ENCODE measurements at regions of chr16 and their contacts with region 1.

Region 1: GRCh38 chr16:86016201-86016871 is 117.4 kb downstream of the IRF8 start:
- DNase-seq: peak; percentile 59
- ATAC-seq: peak; percentile 75
- H3K4me3 ChIP-seq: no peak overlapping the region
- H3K27ac ChIP-seq: no peak overlapping the region
- H3K4me1 ChIP-seq: peaks cover 20% of the 10 kb centered on the region
- H3K27me3 ChIP-seq: no peaks in the 10 kb centered on the region
- CTCF ChIP-seq: peak; percentile 69 to 90 (median 79)
- EP300 ChIP-seq: no peak
- POLR2A ChIP-seq: no peak
- RAD21 ChIP-seq: peak; percentile 99

Region 2: DNA sequence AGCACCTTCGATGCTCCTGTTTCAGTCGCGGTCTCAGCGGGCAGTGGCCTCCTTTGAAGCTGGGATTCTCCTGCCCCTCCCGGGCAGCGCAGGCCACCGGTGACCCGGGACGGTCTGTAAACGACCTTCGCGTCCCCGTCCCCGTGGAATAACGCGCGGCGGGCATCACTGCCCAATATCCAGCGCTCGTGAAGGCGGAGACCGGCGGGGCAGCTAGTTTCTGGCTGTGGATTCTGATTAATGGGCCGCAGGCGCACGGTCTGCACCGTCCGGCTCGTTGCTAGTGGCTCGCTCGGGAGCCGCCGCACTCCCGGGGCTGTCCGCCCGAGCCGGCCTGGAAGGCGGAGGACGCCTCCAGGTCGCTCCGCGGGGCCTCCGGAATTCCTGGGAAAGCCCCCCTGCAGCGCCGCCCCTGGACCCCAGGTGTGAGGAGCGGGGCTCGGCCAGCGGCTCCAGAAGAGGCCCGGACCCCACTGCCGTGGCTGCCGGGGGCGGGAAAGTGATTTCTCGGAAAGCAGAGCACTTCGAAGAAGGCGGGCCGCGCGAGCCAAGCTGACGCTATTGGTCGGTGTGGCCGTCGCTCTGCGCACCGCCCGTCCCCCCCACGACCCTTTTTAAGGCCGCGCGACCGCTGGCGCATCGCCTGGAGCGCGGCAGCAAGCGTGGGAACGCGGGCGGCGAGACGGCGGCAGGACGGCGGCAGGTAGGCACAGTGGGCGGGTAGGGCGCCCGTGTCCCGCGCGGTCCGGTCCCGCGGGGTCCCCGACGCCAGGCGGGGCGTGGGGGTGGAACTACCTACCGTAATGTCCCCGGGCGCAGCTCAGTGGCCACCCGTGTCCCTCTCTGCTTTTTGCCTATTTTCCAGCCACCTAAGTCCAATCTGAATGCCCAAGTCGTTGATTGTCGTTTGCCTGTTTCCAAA is 117.6 kb before region 1 on chr16 and contains the start of gene IRF8:
- CTCF ChIA-PET with region 1: interaction called, 14 read pairs
- POLR2A ChIA-PET with region 1: interaction called, 4 read pairs
- RAD21 ChIA-PET with region 1: interaction called, 7 read pairs
- SMC1A ChIA-PET with region 1: interaction called, 15 read pairs
- in situ Hi-C with region 1: loop called (anchors 10 kb)
- intact Hi-C with region 1: loop called (anchors 2 kb)
- DNase-seq: peak; percentile 59
- ATAC-seq: peak; percentile 77
- H3K4me3 ChIP-seq: peak within 1 kb of the TSS; percentile 99
- H3K27ac ChIP-seq: peak within 1 kb of the TSS; percentile 89
- H3K4me1 ChIP-seq: peaks cover 7% of the 10 kb centered on the region
- H3K27me3 ChIP-seq: no peaks in the 10 kb centered on the region
- CTCF ChIP-seq: no peak
- EP300 ChIP-seq: no peak
- POLR2A ChIP-seq: peak; percentile 100
- RAD21 ChIP-seq: no peak
- polyA plus RNA-seq, gene IRF8: 17.1 to 34.5 TPM

Region 3: GRCh38 chr16:85979605-85980004 is 36.7 kb before region 1 on chr16:
- CTCF ChIA-PET with region 1: interaction called, 100 read pairs
- POLR2A ChIA-PET with region 1: interaction called, 5 read pairs
- RAD21 ChIA-PET with region 1: interaction called, 157 read pairs
- SMC1A ChIA-PET with region 1: interaction called, 338 read pairs
- in situ Hi-C with region 1: no loop called
- intact Hi-C with region 1: loop called (anchors 5 kb)
- DNase-seq: no peak
- ATAC-seq: peak; percentile 94
- H3K4me3 ChIP-seq: no peak overlapping the region
- H3K27ac ChIP-seq: no peak overlapping the region
- H3K4me1 ChIP-seq: peaks cover 15% of the 10 kb centered on the region
- H3K27me3 ChIP-seq: no peaks in the 10 kb centered on the region
- CTCF ChIP-seq: peak; percentile 22 to 53 (median 47); a peak in 4 of 6 replicates
- EP300 ChIP-seq: no peak
- POLR2A ChIP-seq: no peak
- RAD21 ChIP-seq: no peak

Region 4: GRCh38 chr16:86002178-86002900 is 14.0 kb before region 1 on chr16:
- CTCF ChIA-PET with region 1: interaction called, 16 read pairs
- POLR2A ChIA-PET with region 1: interaction called, 58 read pairs
- RAD21 ChIA-PET with region 1: interaction called, 6 read pairs
- SMC1A ChIA-PET with region 1: interaction called, 338 read pairs
- in situ Hi-C with region 1: no loop called
- intact Hi-C with region 1: no loop called
- DNase-seq: peak; percentile 76
- ATAC-seq: peak; percentile 85
- H3K4me3 ChIP-seq: no peak overlapping the region
- H3K27ac ChIP-seq: peak overlapping the region; percentile 81
- H3K4me1 ChIP-seq: peaks cover 49% of the 10 kb centered on the region
- H3K27me3 ChIP-seq: no peaks in the 10 kb centered on the region
- CTCF ChIP-seq: no peak
- EP300 ChIP-seq: no peak
- POLR2A ChIP-seq: peak; percentile 59
- RAD21 ChIP-seq: 0 out of 2 replicates have a peak, but pooled peaks have one; percentile 2

Region 5: GRCh38 chr16:86029131-86029741 is 12.9 kb after region 1 on chr16:
- CTCF ChIA-PET with region 1: no interaction called
- POLR2A ChIA-PET with region 1: no interaction called
- RAD21 ChIA-PET with region 1: no interaction called
- SMC1A ChIA-PET with region 1: no interaction called
- in situ Hi-C with region 1: no loop called
- intact Hi-C with region 1: no loop called
- DNase-seq: no peak
- ATAC-seq: no peak
- H3K4me3 ChIP-seq: no peak overlapping the region
- H3K27ac ChIP-seq: no peak overlapping the region
- H3K4me1 ChIP-seq: no peaks in the 10 kb centered on the region
- H3K27me3 ChIP-seq: peaks cover 2 to 3% of the 10 kb centered on the region in 2 experiments; a peak in 1 of 4 replicates
- CTCF ChIP-seq: no peak
- EP300 ChIP-seq: no peak
- POLR2A ChIP-seq: no peak
- RAD21 ChIP-seq: no peak

Region 6: DNA sequence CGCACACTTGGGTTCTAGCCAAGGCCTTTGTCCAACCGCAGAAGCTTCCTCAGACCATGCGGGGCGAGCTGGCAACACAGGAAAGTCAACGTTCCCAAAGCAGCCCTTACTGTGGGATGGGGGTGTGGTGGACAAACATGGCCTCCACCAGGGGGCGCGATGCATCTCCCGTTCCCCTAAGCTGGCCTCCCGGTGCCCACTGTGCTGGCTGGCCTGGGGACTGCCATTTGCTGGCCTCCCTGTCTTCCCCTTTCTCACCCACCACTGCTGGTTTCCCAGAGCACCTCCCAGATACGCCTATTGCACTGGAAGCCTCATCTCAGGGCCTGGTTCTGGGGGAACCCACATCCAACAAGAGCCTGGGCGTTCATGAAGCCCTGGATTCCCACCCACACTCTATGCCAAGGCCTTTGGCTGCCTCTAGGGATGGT is 27.9 kb after region 1 on chr16:
- CTCF ChIA-PET with region 1: no interaction called
- POLR2A ChIA-PET with region 1: no interaction called
- RAD21 ChIA-PET with region 1: no interaction called
- SMC1A ChIA-PET with region 1: no interaction called
- in situ Hi-C with region 1: no loop called
- intact Hi-C with region 1: no loop called
- DNase-seq: no peak
- ATAC-seq: peak; percentile 84
- H3K4me3 ChIP-seq: no peak overlapping the region
- H3K27ac ChIP-seq: no peak overlapping the region
- H3K4me1 ChIP-seq: no peaks in the 10 kb centered on the region
- H3K27me3 ChIP-seq: peaks cover 3 to 5% of the 10 kb centered on the region in 2 experiments; a peak in 2 of 4 replicates
- CTCF ChIP-seq: peak; percentile 45 to 77 (median 63)
- EP300 ChIP-seq: no peak
- POLR2A ChIP-seq: no peak
- RAD21 ChIP-seq: peak; percentile 23

Region 7: DNA sequence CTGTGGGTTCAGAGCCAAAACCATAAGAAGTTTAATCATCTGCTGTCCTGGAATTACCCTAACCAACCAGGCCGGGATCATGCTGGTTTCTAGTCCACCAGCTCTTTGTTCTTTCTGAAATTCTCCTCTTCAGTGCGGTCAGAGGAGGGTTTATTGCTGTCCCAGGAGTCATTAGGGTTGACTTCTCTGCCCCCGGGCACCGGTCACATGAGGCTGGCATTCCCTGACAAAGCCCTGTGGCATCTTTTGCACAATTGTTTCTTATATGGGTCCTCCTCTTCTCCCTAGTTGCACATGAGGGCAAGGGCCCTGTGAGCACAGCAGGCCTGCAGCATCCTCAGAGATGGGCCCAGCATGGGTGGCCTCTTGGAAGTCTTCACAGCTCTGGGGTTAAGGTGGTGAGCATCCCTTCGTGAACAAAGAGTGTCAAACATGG is 126.5 kb after region 1 on chr16:
- CTCF ChIA-PET with region 1: no interaction called
- POLR2A ChIA-PET with region 1: no interaction called
- RAD21 ChIA-PET with region 1: no interaction called
- SMC1A ChIA-PET with region 1: no interaction called
- in situ Hi-C with region 1: no loop called
- intact Hi-C with region 1: no loop called
- DNase-seq: peak; percentile 38
- ATAC-seq: peak; percentile 79
- H3K4me3 ChIP-seq: no peak overlapping the region
- H3K27ac ChIP-seq: no peak overlapping the region
- H3K4me1 ChIP-seq: no peaks in the 10 kb centered on the region
- H3K27me3 ChIP-seq: no peaks in the 10 kb centered on the region
- CTCF ChIP-seq: no peak
- EP300 ChIP-seq: no peak
- POLR2A ChIP-seq: no peak
- RAD21 ChIP-seq: no peak

Measured in GM12878 (cell line).